ENCODE measurements at regions of chr1 and their contacts with region 1.

Region 1: DNA sequence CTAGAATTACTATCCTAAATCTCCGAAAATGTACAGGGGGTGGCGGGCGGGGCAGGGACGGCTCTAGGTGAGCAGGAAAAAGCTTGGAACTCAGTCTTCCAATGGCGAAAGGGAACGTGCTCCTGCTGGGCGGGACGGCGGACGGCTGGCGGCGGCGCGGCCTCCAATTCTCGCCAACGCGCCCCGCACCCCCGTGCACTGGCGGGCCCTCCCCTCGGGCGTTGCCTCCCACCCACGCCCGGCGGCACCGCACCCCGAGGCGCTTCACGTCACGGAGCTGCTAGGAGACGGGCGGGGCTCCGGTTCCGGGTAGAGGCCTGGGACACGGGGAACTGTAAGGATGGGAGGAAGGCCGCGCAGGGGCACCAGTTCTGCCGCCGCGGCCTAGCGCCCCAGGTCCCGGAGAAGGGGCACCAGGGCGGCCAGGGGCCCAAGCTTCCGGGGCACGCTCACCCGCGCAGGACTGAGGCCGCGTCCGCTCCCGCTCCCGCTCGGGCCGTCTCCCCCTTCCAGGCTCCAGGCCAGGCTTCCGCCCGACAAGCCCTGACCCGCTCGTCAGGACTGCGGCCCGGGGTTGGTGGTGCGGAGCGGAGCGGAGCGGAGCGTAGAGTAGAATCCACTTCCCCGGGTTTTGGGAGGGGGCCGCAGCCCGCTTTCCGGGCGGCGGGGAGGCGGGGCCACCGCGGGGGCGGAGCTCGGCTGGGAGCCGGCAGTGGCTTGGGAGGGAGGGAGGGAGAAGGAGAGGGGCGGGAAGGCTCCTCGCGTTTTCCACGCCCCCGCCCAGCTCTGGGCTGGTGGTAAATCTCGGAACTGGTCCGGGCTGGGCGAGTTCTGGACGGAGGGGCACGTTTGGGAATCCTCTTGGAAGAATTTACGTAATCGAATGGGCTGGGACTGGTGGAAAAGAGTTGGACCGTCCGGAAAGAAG is at the start of gene DDX59:
- DNase-seq: peak; percentile 67
- ATAC-seq: peak; percentile 92
- H3K4me3 ChIP-seq: peak within 1 kb of the TSS; percentile 75 to 79
- H3K27ac ChIP-seq: peak within 1 kb of the TSS; percentile 89
- H3K4me1 ChIP-seq: peaks cover 15% of the 10 kb centered on the region; the same call in 1 of the 2 replicates
- H3K27me3 ChIP-seq: no peaks in the 10 kb centered on the region
- CTCF ChIP-seq: no peak
- total RNA-seq, gene DDX59: 26.4 TPM

Region 2: DNA sequence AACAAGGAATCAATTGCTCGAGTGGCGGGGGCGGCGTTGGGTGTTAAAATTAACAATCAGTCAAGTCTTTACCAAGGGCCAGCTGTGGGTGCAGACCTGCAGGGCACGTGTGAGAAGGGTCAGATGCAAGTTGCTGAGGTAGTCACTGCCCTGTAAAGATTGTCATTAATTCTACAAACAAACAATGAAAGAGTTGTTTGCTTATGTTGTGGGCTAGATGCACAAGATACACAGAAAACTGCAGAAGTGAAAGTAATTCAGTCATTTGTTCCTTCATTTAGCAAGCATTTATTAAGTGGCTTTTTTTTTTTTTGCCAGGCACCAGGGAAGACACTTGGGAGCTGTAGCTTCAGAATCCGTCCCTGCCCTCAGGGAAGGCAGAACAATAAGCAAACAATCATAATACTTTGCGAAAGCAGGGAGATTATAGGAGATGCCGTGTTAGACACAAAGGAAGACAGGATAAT is 562.5 kb before region 1 on chr1:
- CTCF ChIA-PET with region 1: no interaction called
- POLR2A ChIA-PET with region 1: no interaction called
- in situ Hi-C with region 1: no loop called
- intact Hi-C with region 1: no loop called
- DNase-seq: no peak
- ATAC-seq: peak; percentile 77; the same call in 1 of the 2 replicates
- H3K4me3 ChIP-seq: peak overlapping the region; percentile 6 to 21; a peak in 3 of 4 replicates
- H3K27ac ChIP-seq: peak overlapping the region; percentile 52
- H3K4me1 ChIP-seq: peaks cover 11% of the 10 kb centered on the region
- H3K27me3 ChIP-seq: no peaks in the 10 kb centered on the region
- CTCF ChIP-seq: no peak

Region 3: GRCh38 chr1:200774735-200775444 is 105.3 kb after region 1 on chr1:
- CTCF ChIA-PET with region 1: no interaction called
- POLR2A ChIA-PET with region 1: interaction called, 15 read pairs
- in situ Hi-C with region 1: no loop called
- intact Hi-C with region 1: no loop called
- DNase-seq: no peak
- ATAC-seq: no peak
- H3K4me3 ChIP-seq: no peak overlapping the region
- H3K27ac ChIP-seq: no peak overlapping the region
- H3K4me1 ChIP-seq: no peaks in the 10 kb centered on the region
- H3K27me3 ChIP-seq: no peaks in the 10 kb centered on the region
- CTCF ChIP-seq: no peak